Activated CD4-positive, alpha-beta T cell treated with anti-CD3 and anti-CD28 coated beads for 36 hours (primary cell): ENCODE measurements at regions of chr9 and their contacts with region 1.

Region 1: GRCh38 chr9:133726401-133727276 is 11.5 kb downstream of the SARDH start:
- DNase-seq: peak; percentile 81
- ATAC-seq: peak; percentile 80
- H3K4me3 Mint-ChIP-seq: no peak overlapping the region
- H3K27ac Mint-ChIP-seq: no peak overlapping the region
- H3K4me1 Mint-ChIP-seq: peaks cover 12% of the 10 kb centered on the region
- H3K27me3 Mint-ChIP-seq: no peaks in the 10 kb centered on the region

Region 2: GRCh38 chr9:132957805-132958204 is 768.8 kb before region 1 on chr9:
- CTCF ChIA-PET with region 1: no interaction called
- POLR2A ChIA-PET with region 1: no interaction called
- intact Hi-C with region 1: no loop called
- DNase-seq: no peak
- ATAC-seq: no peak
- H3K4me3 Mint-ChIP-seq: no peak overlapping the region
- H3K27ac Mint-ChIP-seq: no peak overlapping the region
- H3K4me1 Mint-ChIP-seq: no peaks in the 10 kb centered on the region
- H3K27me3 Mint-ChIP-seq: peaks cover 14% of the 10 kb centered on the region

Region 3: DNA sequence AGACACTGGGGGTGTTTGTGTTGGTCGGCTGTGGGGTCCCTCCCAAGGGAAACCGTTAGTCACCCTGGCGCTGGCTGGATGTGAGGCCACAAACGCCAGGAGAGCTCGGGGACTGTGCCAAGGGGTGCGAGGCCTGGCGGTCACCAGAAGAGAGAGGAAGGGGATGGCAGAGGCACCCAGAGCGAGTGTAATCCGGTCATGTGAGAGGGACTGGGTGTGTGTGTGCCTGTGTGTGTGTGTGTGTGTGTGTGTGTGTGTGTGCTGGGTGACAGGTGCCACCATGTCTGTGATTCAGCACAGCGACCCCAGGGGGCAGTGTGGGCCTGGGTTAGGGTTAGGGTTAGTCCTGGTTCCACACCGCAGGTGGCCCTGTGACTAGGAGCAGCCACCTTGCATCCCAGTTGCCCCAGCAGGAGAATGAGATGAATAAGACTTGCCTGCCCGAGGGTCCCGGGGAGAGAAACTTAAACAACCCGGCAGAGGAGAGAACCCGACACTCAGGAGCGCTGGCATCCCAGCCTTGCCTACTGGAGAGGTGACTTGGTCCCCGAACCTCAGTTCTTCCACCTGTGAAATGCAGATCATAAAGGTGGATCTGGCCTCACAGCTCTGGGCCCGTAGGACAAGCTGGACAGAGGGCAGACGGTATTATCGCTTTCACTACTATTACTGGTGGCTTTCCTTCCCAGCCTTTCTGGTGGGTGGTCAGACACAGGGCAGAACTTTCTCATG is 193.5 kb before region 1 on chr9:
- CTCF ChIA-PET with region 1: interaction called, 3 read pairs
- POLR2A ChIA-PET with region 1: no interaction called
- intact Hi-C with region 1: loop called (anchors 1 to 5 kb)
- DNase-seq: peak; percentile 89
- ATAC-seq: peak; percentile 82
- H3K4me3 Mint-ChIP-seq: peak overlapping the region; percentile 16
- H3K27ac Mint-ChIP-seq: no peak overlapping the region
- H3K4me1 Mint-ChIP-seq: peaks cover 15% of the 10 kb centered on the region
- H3K27me3 Mint-ChIP-seq: peaks cover 4% of the 10 kb centered on the region

Region 4: GRCh38 chr9:133589454-133590227 is 137.0 kb before region 1 on chr9:
- CTCF ChIA-PET with region 1: interaction called, 6 read pairs
- POLR2A ChIA-PET with region 1: no interaction called
- intact Hi-C with region 1: loop called (anchors 1 kb)
- DNase-seq: peak; percentile 79
- ATAC-seq: peak; percentile 72
- H3K4me3 Mint-ChIP-seq: no peak overlapping the region
- H3K27ac Mint-ChIP-seq: no peak overlapping the region
- H3K4me1 Mint-ChIP-seq: peaks cover 3% of the 10 kb centered on the region
- H3K27me3 Mint-ChIP-seq: peaks cover 8% of the 10 kb centered on the region

Region 5: GRCh38 chr9:133658442-133659431 is 67.9 kb before region 1 on chr9:
- CTCF ChIA-PET with region 1: interaction called, 6 read pairs
- POLR2A ChIA-PET with region 1: no interaction called
- intact Hi-C with region 1: loop called in 1 of 2 experiments (anchors 1 kb)
- DNase-seq: peak; percentile 53
- ATAC-seq: peak; percentile 57
- H3K4me3 Mint-ChIP-seq: peak overlapping the region; percentile 26
- H3K27ac Mint-ChIP-seq: no peak overlapping the region
- H3K4me1 Mint-ChIP-seq: peaks cover 33% of the 10 kb centered on the region
- H3K27me3 Mint-ChIP-seq: peaks cover 9% of the 10 kb centered on the region

Region 6: DNA sequence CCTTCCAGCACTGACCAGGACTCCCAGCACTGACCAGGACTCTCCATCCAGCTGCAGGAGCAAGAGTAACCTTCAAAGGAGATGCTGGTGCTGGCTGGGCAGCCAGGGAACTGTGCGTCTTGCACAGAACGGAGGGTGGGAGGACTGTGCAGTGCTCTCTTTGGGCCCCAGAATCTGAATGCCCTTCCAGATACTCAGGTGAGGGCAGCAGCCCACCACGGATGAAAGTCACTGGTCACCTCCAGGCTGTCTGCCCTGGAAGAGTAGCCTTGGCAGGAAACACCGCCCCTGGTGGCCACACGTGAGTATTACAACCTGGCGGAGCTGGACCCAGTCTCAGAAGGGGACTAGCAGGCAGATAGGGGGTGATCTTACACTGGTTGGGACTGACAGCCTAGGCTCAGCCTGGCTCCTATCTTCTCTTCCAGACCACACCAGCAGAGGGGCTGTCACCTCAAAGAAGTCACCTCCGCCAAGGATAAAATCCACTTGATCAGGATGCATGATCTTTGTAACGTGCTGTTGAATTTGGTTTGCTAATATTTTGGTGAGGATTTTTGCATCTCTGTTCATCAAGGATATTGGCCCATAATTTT is 16.3 kb after region 1 on chr9:
- CTCF ChIA-PET with region 1: interaction called, 11 read pairs
- POLR2A ChIA-PET with region 1: no interaction called
- intact Hi-C with region 1: no loop called
- DNase-seq: peak; percentile 86
- ATAC-seq: peak; percentile 79
- H3K4me3 Mint-ChIP-seq: no peak overlapping the region
- H3K27ac Mint-ChIP-seq: no peak overlapping the region
- H3K4me1 Mint-ChIP-seq: peaks cover 7% of the 10 kb centered on the region
- H3K27me3 Mint-ChIP-seq: no peaks in the 10 kb centered on the region